Vagina (tissue), 2 donors: ENCODE measurements at regions of chr4 and their contacts with region 1.

Region 1: GRCh38 chr4:76251441-76252270 is at the start of gene FAM47E:
- DNase-seq: no peak
- H3K4me3 ChIP-seq: peak within 1 kb of the TSS; percentile 61 to 71
- H3K27ac ChIP-seq: peak within 1 kb of the TSS; percentile 51
- H3K4me1 ChIP-seq: peaks cover 9% of the 10 kb centered on the region
- H3K27me3 ChIP-seq: no peaks in the 10 kb centered on the region
- CTCF ChIP-seq: peak in 2 of 3 experiments; percentile 10 to 27
- POLR2A ChIP-seq: no peak
- total RNA-seq, gene FAM47E: 0.49 TPM

Region 2: DNA sequence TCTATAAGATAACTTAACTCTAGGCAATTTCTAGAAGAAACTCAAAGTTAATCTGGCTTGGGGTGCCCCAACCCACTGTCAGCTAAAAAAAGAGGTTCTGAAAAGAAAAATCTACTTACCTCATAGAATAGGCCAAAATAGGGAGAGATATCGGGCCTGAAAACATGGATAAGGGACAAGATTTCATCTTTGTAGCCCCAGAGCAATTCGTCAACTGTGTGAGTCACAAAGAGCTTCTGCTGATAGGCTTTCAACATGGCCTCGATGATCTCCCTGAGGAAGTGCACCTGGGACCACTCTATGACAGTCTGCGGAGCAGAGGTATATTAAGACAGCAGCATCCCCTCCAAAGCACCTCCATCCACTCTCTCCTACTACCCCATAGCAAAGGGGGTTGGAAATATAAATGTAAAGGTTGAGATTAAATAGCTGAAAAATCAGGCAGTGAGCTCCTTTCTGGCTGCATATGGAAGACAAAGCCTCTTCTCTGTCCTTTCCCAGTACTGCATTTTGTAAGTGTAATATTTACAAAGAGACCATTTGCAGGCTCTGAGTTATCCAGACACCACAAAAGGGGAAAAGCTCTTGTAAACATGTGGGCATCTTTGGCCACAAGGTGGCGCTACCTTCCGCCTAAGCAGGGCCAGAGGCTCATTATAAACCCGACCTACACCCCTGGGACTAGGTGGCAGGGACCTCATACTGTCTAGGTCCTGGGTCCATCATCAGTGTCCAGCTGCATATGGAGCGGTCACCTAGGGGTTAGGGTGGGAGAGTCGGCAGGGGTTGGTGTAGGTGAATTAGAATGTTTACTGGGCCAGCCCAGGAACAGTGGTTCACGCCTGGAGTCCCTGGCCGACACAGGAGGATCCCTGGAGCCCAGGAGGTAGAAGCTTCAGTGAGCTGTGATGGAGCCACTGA is 72.0 kb before region 1 on chr4:
- intact Hi-C with region 1: loop called (anchors 5 kb)
- DNase-seq: no peak
- H3K4me3 ChIP-seq: no peak overlapping the region
- H3K27ac ChIP-seq: peak overlapping the region; percentile 21
- H3K4me1 ChIP-seq: peaks cover 20% of the 10 kb centered on the region
- H3K27me3 ChIP-seq: no peaks in the 10 kb centered on the region
- CTCF ChIP-seq: peak; percentile 77 to 97 (median 80)
- POLR2A ChIP-seq: no peak

Region 3: DNA sequence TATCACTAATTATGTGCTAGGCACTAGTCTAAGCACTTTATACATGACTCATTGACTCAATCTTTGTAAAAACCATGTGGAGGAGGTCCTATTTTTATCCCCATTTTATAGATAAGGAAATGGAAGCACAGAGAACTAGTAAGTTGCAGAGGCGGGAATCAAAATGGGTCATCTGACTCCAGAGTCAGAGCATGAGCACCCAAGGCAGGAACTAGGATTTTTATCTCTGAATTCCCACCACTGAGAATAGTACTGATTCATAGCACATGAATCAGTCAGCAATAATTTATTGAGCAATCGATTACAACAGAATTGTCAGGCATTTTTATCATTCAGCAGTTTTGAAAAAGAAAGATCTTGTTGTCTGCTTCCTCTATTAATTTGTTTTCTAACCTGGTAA is 57.3 kb before region 1 on chr4:
- intact Hi-C with region 1: no loop called
- DNase-seq: no peak
- H3K4me3 ChIP-seq: no peak overlapping the region
- H3K27ac ChIP-seq: peak overlapping the region; percentile 82
- H3K4me1 ChIP-seq: peaks cover 65% of the 10 kb centered on the region
- H3K27me3 ChIP-seq: no peaks in the 10 kb centered on the region
- CTCF ChIP-seq: no peak
- POLR2A ChIP-seq: no peak

Region 4: DNA sequence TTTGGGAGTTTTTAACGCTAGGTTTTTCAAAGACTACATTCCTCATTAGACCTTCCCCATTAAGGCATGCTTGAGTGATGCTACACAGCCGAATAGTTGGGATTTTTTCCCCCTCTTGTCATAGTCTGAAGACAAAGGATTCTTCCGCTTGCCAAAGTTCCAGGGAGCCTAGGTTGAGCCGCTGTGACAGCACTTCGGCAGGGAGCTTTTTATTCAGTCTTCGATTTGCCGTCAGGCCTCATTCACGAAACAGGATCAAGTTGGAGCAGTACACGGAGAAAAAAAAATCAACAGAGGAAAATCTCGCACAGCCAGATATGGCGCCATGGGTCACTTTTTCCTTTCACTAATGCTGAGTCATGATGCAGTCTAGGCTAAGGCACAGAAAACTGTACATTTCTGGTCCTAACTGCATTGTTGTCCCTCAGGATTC is 207.7 kb after region 1 on chr4:
- intact Hi-C with region 1: no loop called
- DNase-seq: no peak
- H3K4me3 ChIP-seq: no peak overlapping the region
- H3K27ac ChIP-seq: no peak overlapping the region
- H3K4me1 ChIP-seq: no peaks in the 10 kb centered on the region
- H3K27me3 ChIP-seq: no peaks in the 10 kb centered on the region
- CTCF ChIP-seq: no peak
- POLR2A ChIP-seq: no peak